KBM-7 (cell line): ENCODE measurements at regions of chr20 and their contacts with region 1.

Region 1: DNA sequence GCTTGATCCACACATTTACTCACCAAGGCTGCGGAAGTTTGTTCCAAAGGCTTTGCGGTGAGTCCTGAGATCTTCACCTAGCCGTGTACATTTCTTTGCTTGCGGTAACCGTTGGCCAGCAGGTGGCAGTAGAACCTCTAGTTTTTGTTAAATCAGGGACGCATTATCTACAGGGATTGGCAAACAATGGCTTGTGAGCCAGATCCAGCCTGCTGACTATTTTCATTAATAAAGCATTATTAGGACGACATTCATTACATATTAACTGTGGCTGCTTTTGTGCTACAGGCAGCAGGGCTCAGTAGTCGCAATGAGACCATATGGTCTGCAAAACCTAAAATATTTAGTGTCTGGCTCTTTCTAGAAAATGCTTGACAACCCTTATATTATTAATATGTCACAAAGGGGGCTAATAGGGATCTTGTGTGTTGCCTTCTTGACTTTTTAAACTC is 174.1 kb downstream of the DOK5 start:
- DNase-seq: peak; percentile 63

Region 2: DNA sequence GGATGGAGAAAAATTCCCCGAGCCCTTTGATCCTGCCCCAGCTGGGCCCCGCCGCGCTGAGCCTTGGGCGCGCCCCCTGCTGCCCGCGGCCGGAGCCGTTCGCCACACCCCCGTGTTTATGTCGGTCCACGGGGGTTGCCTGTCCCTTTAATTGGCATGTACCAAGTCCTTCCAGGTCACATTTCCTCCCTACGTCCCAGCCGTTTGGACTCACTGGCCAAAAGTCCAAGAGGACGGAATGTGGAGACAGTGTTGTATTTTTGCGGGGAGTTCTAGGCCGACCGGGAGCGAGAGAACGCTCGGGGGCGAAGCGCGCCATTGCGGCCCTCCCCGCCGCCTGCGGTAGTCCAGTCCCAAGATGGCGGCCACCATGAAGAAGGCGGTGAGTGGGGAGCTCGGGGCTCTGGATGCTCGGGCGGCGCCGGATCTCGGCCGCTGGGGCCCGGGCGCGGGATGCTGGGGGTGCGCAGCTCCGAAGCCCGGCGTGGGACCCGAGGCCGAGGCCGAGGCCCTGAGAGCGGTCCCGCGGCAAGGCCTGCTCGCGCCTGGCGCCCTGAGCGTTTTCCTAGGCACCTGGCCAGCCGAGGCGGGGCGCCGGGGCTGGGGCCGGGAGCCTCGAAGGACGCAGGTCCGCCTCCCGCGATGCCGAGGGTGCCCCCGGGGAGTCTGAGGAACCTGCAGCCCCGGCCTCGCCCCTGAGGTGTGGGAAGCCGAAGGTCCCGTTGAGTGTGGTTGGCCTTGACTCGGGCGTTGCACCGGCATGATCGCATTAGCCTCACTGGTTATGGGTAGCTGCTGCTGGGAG is 441.6 kb before region 1 on chr20 and contains the start of gene PFDN4:
- in situ Hi-C with region 1: loop called (anchors 25 kb)
- DNase-seq: peak; percentile 90